ENCODE measurements at regions of chr5 and their contacts with region 1.

Region 1: DNA sequence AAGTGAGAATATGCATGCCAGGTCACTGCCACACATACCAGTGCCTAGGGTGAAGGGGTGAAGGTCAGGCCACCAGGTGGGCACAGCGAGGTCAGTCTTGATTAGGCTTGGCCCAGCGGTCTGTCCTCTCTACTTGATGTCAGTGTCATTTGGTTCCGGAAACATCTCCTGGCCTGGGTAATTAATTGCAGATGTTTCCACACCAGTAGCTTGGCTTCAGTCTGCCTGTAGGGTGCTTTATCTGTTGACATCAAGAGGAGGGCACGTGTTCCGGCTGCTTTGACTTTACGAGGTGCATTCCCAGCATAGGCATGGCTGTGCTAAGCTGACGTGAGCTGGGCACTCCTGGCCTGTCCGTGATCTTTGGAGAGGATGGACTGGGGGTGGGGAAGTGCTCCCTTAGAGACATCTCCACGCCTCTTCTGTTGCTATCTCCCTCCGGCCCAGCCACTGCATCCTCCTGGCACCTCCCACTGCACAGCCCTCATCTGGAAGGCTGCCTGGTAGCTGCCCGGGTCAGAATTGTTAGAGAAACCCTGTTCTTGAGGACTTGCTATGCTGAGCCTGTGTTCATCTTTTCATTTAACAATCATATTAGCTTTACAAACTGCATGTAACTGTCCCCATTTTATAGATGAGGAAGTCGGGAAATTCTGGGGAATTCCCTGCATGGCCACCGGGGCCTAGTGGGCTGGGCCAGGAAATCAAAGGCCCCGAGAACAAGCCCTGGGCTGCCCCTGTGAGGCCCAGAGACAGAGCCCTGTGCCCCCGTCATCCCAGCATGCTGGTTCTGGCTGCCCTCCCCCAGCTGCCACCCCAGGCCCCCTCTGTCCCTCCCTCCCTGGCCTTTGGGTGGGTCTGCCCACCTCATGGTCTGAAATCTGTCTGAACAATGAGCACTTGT is 29.1 kb downstream of the JADE2 start:
- DNase-seq: peak; percentile 76 to 94 (median 79)
- ATAC-seq: peak; percentile 81 to 91 (median 86)
- H3K4me3 ChIP-seq: no peak overlapping the region
- H3K27ac ChIP-seq: peak overlapping the region; percentile 54 to 94 (median 86)
- H3K4me1 ChIP-seq: peaks cover 18 to 78% (median 61%) of the 10 kb centered on the region in 12 donors
- H3K27me3 ChIP-seq: no peaks in the 10 kb centered on the region
- CTCF ChIP-seq: no peak
- POLR2A ChIP-seq: no peak

Region 2: DNA sequence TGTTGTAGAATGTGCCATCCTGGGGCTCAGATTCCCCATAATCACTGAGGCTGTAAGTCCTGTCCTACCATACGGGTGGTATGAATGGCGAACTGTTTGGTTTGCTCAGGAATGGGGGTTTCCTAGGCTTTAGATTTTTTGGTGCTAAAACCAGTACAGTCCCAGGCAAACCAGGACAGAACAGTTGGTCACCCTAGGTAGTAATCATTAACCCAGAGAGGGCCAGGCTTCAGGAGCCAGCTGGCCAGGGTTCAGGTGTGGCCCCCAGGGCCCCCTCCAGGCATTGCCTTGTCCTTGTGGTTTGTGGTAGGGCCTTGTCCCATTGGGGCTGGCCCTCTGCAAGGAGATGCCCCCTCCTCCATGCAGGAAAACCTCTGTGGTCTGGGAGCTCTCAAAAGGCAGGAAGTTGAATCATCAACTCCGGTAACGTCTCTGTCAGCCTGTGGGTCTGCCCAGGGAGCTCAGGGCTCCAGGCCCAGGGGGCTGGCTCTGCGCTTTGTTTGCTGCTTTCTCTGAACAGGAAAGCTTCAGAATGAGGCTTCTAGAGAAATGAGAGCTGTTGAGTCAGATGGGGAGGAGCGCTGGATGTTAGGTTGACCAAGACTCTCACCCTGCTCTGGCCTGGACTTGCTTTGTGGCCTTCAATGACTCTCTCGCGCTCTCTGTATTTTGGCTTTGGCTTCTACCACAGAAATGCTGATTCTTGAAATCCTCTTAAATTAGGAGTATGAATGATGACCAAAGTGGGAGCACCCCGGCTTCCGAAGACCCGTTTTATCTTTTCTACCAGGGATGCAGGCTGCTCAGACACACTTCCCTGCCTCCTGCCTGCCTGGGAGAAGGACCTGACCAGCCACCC is 51.3 kb before region 1 on chr5:
- intact Hi-C with region 1: no loop called
- DNase-seq: peak; percentile 62 to 89 (median 69)
- ATAC-seq: peak; percentile 16 to 81 (median 78)
- H3K4me3 ChIP-seq: no peak overlapping the region
- H3K27ac ChIP-seq: peak overlapping the region; percentile 8 to 86 (median 76)
- H3K4me1 ChIP-seq: peaks cover 5 to 42% (median 27%) of the 10 kb centered on the region in 12 donors
- H3K27me3 ChIP-seq: no peaks in the 10 kb centered on the region
- CTCF ChIP-seq: no peak
- POLR2A ChIP-seq: peak in 1 of 2 donors; percentile 57

Region 3: GRCh38 chr5:134577796-134578363 is 23.3 kb after region 1 on chr5:
- intact Hi-C with region 1: loop called in 1 of 10 experiments (anchors 1 kb)
- DNase-seq: peak; percentile 71 to 89 (median 77)
- ATAC-seq: peak in 3 of 4 donors; percentile 30 to 53 (median 51)
- H3K4me3 ChIP-seq: no peak overlapping the region
- H3K27ac ChIP-seq: peak overlapping the region in 2 of 12 donors; percentile 20 to 30
- H3K4me1 ChIP-seq: peaks cover 0 to 55% (median 33%) of the 10 kb centered on the region in 12 donors
- H3K27me3 ChIP-seq: no peaks in the 10 kb centered on the region
- CTCF ChIP-seq: peak; percentile 73 to 89 (median 84)
- POLR2A ChIP-seq: no peak

Region 4: DNA sequence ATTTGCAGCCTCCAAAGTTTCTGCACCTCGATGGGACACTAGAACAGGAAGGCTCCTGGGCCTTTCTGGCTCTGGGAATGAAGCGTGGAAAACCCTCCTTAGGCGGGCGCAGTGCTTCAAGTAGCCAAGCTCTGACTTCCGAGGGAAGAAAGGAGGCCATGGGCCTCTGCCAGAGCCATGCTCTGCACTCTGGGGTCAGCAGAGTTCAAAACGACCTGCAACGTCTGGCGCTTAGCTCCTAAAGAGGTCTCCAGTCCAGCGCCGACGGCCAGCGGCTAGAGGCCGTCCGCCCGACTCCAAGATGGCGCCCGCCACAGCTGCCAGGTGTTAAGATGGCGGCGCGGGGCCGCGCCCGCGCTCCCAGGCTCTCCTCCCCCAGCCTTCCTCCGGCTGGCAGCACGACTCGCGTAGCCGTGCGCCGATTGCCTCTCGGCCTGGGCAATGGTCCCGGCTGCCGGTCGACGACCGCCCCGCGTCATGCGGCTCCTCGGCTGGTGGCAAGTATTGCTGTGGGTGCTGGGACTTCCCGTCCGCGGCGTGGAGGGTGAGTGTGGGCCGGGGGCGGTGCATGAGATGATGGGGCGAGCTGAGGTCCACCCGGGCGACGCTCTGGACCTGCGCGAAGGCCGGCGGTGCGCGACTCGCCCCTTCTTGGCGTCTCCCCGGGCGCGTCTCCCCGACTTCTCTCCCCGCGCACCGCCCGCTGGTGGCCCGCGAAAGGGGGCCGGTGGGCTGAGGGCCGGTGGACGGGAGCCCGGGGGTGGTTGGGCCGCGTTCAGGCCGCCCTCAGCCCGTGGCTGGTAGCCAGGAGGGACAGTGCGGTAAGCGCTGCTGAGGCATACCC is 319.6 kb after region 1 on chr5 and contains the start of gene TXNDC15:
- intact Hi-C with region 1: no loop called
- DNase-seq: peak; percentile 90 to 94 (median 93)
- ATAC-seq: peak; percentile 90 to 97 (median 96)
- H3K4me3 ChIP-seq: peak within 1 kb of the TSS; percentile 74 to 97 (median 91)
- H3K27ac ChIP-seq: peak within 1 kb of the TSS; percentile 66 to 99 (median 96)
- H3K4me1 ChIP-seq: peaks cover 0 to 38% (median 18%) of the 10 kb centered on the region in 12 donors
- H3K27me3 ChIP-seq: no peaks in the 10 kb centered on the region
- CTCF ChIP-seq: no peak
- POLR2A ChIP-seq: peak in 1 of 2 donors; percentile 56
- total RNA-seq, gene TXNDC15: 38.4 to 59.7 (median 55.6) TPM